BJ (cell line): ENCODE measurements at regions of chr2 and their contacts with region 1.

Region 1: GRCh38 chr2:218301176-218301819 is 9.0 kb upstream of the TMBIM1 start:
- DNase-seq: no peak
- H3K4me3 ChIP-seq: no peak overlapping the region
- H3K27me3 ChIP-seq: no peaks in the 10 kb centered on the region; the same call in 1 of the 2 replicates
- CTCF ChIP-seq: peak; percentile 93

Region 2: DNA sequence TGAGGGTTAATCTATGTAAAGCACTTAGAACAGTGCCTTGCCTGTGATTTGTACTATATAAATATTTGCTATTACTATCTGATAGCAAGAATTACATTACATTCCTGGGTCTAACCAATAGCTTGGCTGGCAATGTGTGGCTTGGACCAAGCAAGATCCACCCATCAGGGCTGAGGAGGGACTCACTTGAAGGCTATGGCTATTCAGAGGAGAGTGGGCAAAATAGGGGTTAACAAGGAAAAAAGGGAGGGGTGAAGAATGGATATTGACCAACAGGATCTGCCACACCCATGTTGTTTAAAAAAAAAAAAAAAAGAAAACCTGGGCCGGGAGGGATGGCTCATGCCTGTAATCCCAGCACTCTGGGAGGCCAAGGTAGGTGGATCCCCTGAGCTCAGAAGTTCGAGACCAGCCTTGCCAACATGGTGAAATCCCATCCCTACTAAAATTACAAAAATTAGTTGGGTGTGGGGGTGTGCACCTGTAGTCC is 11.0 kb after region 1 on chr2:
- CTCF ChIA-PET with region 1: interaction called, 10 read pairs
- POLR2A ChIA-PET with region 1: no interaction called
- DNase-seq: no peak
- H3K4me3 ChIP-seq: no peak overlapping the region
- H3K27me3 ChIP-seq: no peaks in the 10 kb centered on the region
- CTCF ChIP-seq: no peak

Region 3: DNA sequence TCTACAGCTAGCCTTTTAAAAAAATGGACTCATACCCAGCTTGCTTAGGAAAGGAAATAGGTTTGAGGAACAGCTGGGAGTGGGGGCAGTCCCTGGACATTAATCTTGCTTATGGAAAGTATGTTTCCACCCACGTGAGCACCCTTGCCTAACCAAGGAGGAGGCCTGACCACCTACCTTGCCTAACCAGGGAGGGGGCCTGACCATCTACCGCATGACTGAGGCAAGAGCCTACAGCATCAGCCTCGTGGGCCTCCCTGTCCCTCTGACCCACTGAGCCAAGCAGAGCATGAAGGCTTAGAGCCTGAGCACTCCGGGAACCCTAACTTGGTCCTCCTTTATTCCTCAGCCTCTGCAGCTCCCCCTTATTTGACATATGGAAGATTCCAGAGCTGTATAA is 510.1 kb after region 1 on chr2:
- CTCF ChIA-PET with region 1: no interaction called
- POLR2A ChIA-PET with region 1: no interaction called
- DNase-seq: no peak
- H3K4me3 ChIP-seq: no peak overlapping the region
- H3K27me3 ChIP-seq: no peaks in the 10 kb centered on the region
- CTCF ChIP-seq: no peak